HEK293T (cell line): ENCODE measurements at regions of chr7 and their contacts with region 1.

Region 1: GRCh38 chr7:74037600-74037999 is 9.6 kb downstream of the ELN start:
- DNase-seq: no peak

Region 2: DNA sequence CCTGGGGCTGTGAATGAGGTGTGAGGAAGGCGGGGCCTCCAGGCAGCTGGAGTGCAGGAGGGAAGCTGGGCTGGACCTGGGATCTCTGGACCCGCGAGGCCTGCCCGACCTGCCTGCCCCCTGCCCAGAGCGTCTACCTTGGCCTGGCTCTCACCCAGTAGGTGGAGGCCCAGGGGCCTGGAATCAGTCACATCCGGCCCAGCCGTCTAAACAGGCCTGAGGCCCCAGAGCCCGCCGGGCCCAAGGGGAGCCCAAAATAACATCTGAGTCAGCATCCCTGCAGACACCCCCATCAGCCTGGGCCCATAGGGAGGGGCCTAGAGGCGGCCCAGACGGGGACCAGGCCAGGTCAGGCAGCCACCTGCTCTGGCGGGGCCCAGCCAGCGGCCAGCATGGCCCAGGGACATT is 24.8 kb before region 1 on chr7:
- CTCF ChIA-PET with region 1: no interaction called
- POLR2A ChIA-PET with region 1: no interaction called
- DNase-seq: no peak

Region 3: GRCh38 chr7:74026903-74027551 is 10.6 kb before region 1 on chr7:
- CTCF ChIA-PET with region 1: interaction called, 18 read pairs
- POLR2A ChIA-PET with region 1: no interaction called
- DNase-seq: peak; percentile 81

Region 4: DNA sequence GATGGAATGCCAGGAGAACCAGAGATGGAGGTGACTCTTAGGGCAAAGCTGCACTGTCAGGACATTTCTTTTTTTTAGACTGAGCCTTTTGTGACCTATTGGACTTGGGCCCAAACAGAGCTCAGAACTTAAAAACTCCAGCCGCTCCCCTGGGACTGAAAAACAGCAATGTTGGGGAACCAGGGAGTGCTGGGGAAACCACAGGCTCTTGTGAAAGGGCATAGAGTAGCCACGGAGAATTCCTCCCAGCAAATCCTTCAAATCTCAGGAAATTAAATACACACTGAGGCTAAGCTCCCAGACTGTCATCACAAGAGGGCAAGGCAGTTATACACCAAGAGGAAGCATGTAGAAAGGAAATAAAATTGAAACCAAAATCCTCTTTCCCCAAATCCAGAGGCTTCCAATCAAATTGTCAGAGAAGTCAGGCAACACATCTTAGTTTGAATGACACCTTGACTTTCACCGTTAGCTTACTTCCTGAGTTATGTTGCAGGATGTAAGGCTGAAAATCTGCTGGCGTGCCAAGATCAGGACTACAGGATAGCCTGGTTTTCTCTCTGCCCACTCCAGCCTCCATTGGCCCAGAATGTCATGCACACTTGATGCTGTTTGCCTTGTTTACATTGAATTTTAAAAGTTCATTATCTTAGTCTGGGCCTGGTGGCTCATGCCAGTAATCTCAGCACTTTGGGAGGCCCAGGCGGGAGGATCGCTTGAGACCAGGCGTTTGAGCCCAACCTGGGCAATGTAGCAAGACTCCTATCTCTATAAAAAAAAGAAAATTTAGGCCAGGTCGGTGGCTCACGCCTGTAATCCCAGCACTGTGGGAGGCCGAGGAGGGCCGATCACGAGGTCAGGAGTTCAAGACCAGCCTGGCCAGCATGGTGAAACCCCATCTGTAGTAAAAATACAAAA is 219.2 kb after region 1 on chr7:
- CTCF ChIA-PET with region 1: no interaction called
- POLR2A ChIA-PET with region 1: no interaction called
- DNase-seq: no peak